HepG2 (cell line): ENCODE measurements at regions of chr11 and their contacts with region 1.

Region 1: DNA sequence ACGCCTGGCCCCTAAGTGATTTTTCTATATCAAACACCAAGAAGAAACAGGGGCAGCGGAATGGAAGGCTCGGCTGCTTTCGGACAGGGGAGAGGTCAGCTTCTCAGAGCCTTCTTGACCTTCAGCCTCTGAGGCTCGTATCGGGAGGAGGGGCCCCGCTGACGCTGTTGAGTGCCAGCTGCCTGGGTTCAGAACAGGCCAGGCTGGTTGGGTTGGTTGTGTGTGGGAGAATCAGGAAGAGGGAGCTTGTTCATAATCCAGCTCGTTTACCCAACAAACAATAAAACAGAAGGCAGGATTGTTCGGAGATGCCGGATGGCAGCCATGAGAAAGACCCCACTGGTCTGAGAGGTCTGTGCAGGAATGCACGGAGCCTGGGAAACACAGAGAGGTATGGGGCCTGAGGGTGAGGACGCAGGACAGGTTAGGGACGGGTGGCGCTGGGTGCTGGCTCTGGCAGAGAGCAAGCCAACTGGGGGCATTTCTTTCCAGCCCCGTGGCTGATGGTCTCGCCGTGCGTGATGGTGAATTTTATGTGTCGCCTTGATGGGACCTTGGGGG is 31.6 kb upstream of the SHANK2 start:
- DNase-seq: peak; percentile 62
- ATAC-seq: peak; percentile 39
- H3K4me3 ChIP-seq: peak overlapping the region in 1 of 3 experiments; percentile 22; a peak in 1 of 6 replicates
- H3K27ac ChIP-seq: no peak overlapping the region
- H3K4me1 ChIP-seq: peaks cover 71% of the 10 kb centered on the region
- H3K27me3 ChIP-seq: 0 out of 5 replicates have a peak, but pooled peaks cover 0 to 5% of the 10 kb centered on the region in 2 experiments
- CTCF ChIP-seq: no peak
- EP300 ChIP-seq: no peak
- POLR2A ChIP-seq: no peak
- RAD21 ChIP-seq: no peak

Region 2: GRCh38 chr11:71070491-71071453 is 213.2 kb before region 1 on chr11:
- CTCF ChIA-PET with region 1: no interaction called
- POLR2A ChIA-PET with region 1: no interaction called
- in situ Hi-C with region 1: no loop called
- intact Hi-C with region 1: no loop called
- DNase-seq: no peak
- ATAC-seq: no peak
- H3K4me3 ChIP-seq: no peak overlapping the region
- H3K27ac ChIP-seq: no peak overlapping the region
- H3K4me1 ChIP-seq: no peaks in the 10 kb centered on the region
- H3K27me3 ChIP-seq: no peaks in the 10 kb centered on the region
- CTCF ChIP-seq: no peak
- EP300 ChIP-seq: no peak
- POLR2A ChIP-seq: no peak
- RAD21 ChIP-seq: no peak

Region 3: GRCh38 chr11:71240865-71241691 is 42.9 kb before region 1 on chr11:
- CTCF ChIA-PET with region 1: no interaction called
- POLR2A ChIA-PET with region 1: no interaction called
- in situ Hi-C with region 1: no loop called
- intact Hi-C with region 1: no loop called
- DNase-seq: peak; percentile 93
- ATAC-seq: peak; percentile 85
- H3K4me3 ChIP-seq: peak overlapping the region; percentile 18 to 44 (median 19); a peak in 3 of 6 replicates
- H3K27ac ChIP-seq: peak overlapping the region; percentile 88
- H3K4me1 ChIP-seq: peaks cover 68% of the 10 kb centered on the region
- H3K27me3 ChIP-seq: no peaks in the 10 kb centered on the region
- CTCF ChIP-seq: peak; percentile 16; the same call in 1 of the 2 replicates
- EP300 ChIP-seq: peak; percentile 76 to 87; a peak in 3 of 4 replicates
- POLR2A ChIP-seq: peak in 1 of 2 experiments; percentile 41; a peak in 1 of 4 replicates
- RAD21 ChIP-seq: no peak

Region 4: GRCh38 chr11:71266221-71266833 is 17.6 kb before region 1 on chr11:
- CTCF ChIA-PET with region 1: no interaction called
- POLR2A ChIA-PET with region 1: no interaction called
- in situ Hi-C with region 1: no loop called
- intact Hi-C with region 1: loop called (anchors 1 kb)
- DNase-seq: no peak
- ATAC-seq: peak; percentile 34
- H3K4me3 ChIP-seq: peak overlapping the region in 1 of 3 experiments; percentile 50; a peak in 2 of 6 replicates
- H3K27ac ChIP-seq: peak overlapping the region; percentile 20
- H3K4me1 ChIP-seq: peaks cover 71% of the 10 kb centered on the region
- H3K27me3 ChIP-seq: 0 out of 5 replicates have a peak, but pooled peaks cover 0 to 6% of the 10 kb centered on the region in 2 experiments
- CTCF ChIP-seq: peak; percentile 39
- EP300 ChIP-seq: no peak
- POLR2A ChIP-seq: no peak
- RAD21 ChIP-seq: no peak